ENCODE measurements at regions of chr1 and their contacts with region 1.

Region 1: DNA sequence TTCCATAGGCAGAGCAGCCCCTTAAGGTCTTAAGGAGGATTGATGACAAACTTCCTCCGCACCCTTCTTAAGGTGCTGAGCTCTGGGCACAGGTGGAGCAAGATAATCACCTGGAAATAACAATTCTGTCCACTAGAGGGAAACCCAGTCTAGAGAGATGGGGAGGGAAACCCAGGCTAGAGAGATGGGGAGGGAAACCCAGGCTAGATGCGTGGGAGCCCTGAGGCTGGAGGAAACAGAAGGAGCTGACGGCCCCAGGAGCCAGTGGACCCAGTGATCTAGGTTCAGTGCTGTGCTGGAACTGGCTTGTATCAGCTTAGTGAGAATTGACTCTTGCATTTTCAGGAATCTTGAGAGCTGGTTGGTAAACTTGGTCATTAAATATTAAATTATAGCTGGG is 17.8 kb upstream of the MYCL start:
- DNase-seq: peak; percentile 68
- H3K4me3 Mint-ChIP-seq: no peak overlapping the region
- H3K27ac Mint-ChIP-seq: no peak overlapping the region
- H3K4me1 Mint-ChIP-seq: peaks cover 2% of the 10 kb centered on the region
- H3K27me3 Mint-ChIP-seq: peaks cover 4% of the 10 kb centered on the region

Region 2: DNA sequence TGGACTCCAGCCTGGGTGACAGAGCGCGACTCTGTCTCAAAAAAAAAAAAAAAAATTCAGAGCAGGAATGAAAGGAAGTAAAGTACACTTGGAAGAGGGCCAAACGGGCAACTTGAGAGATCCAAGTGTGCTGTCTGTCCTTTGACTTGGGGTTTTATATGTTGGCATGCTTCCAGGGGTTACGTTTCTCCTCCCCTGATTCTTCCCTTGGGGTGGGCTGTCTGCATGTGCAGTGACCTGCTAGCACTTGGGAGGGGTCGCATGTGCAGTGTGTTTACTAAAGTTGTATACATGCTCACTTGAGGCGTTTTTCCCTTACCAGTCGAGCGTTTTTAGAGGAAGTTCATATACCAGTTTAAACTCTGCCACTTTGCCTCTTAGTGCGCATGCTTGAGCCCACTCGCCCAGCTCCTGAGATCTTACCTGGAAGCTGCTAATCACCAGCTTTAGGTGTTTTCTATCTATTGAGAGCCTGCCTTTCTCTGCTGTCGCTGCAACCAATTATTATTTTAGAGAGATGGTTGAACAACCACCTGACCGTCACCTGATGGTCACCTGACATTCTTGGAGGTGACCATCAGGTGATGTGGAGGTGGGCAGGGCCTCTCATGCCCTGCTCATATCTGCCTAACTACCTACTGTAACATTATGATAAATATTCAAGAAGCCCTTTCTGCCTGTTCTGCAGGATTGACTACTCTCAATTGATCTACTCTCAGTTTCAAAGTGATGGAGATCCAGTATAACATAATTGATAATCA is 575.0 kb before region 1 on chr1:
- CTCF ChIA-PET with region 1: no interaction called
- POLR2A ChIA-PET with region 1: no interaction called
- intact Hi-C with region 1: no loop called
- DNase-seq: no peak
- H3K4me3 Mint-ChIP-seq: no peak overlapping the region
- H3K27ac Mint-ChIP-seq: peak overlapping the region; percentile 11
- H3K4me1 Mint-ChIP-seq: peaks cover 2% of the 10 kb centered on the region
- H3K27me3 Mint-ChIP-seq: no peaks in the 10 kb centered on the region

Region 3: GRCh38 chr1:39908534-39908933 is 11.0 kb before region 1 on chr1:
- CTCF ChIA-PET with region 1: interaction called, 15 read pairs
- POLR2A ChIA-PET with region 1: no interaction called
- intact Hi-C with region 1: no loop called
- DNase-seq: no peak
- H3K4me3 Mint-ChIP-seq: no peak overlapping the region
- H3K27ac Mint-ChIP-seq: no peak overlapping the region
- H3K4me1 Mint-ChIP-seq: no peaks in the 10 kb centered on the region
- H3K27me3 Mint-ChIP-seq: peaks cover 27% of the 10 kb centered on the region

Region 4: GRCh38 chr1:39954816-39955546 is 35.4 kb after region 1 on chr1 and contains the start of gene MFSD2A:
- CTCF ChIA-PET with region 1: interaction called, 15 read pairs
- POLR2A ChIA-PET with region 1: no interaction called
- intact Hi-C with region 1: no loop called
- DNase-seq: peak; percentile 94
- H3K4me3 Mint-ChIP-seq: peak within 1 kb of the TSS; percentile 84
- H3K27ac Mint-ChIP-seq: peak within 1 kb of the TSS; percentile 75
- H3K4me1 Mint-ChIP-seq: peaks cover 30% of the 10 kb centered on the region
- H3K27me3 Mint-ChIP-seq: no peaks in the 10 kb centered on the region
- total RNA-seq, gene MFSD2A: 6.0 to 7.5 TPM

Region 5: GRCh38 chr1:40032240-40032891 is 112.8 kb after region 1 on chr1:
- CTCF ChIA-PET with region 1: interaction called, 79 read pairs
- POLR2A ChIA-PET with region 1: no interaction called
- intact Hi-C with region 1: loop called (anchors 2 kb)
- DNase-seq: peak; percentile 61
- H3K4me3 Mint-ChIP-seq: no peak overlapping the region
- H3K27ac Mint-ChIP-seq: no peak overlapping the region
- H3K4me1 Mint-ChIP-seq: peaks cover 26% of the 10 kb centered on the region
- H3K27me3 Mint-ChIP-seq: no peaks in the 10 kb centered on the region

Region 6: DNA sequence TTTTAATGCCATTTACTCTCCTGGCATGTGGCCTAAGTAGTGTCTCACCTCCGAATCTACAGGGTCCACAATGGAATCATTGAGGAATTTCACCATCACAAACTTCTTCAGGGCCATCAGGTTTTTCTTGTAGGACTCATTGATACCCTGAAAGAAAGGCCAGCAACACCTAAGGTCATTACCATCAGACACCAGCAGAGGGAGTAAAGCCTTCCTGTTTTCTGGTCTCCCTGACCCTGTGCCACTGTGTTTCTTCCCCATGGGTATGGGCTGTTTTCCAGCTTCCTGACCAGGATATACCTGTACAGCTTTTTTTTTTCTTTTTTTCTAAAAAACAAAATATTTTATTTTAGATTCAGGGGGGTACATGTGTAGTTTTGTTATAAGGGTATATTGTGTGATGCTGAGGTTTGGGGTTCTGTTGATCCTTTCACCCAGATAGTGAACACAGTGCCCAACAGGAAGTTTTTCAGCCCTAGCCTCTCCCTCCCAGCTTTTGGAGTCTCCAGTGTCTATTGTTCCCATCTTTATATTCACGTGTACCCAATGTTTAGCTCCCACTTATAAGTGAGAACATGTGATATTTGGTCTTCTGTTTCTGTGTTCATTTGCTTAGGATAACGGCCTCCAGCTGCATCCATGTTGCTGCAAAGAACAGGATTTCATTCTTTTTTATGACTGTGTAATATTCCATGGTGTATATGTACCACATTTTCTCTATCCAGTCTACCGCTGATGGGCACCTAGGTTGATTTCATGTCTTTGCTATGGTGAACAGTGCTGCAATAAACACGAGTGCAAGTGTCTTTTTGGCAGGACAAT is 159.2 kb after region 1 on chr1:
- CTCF ChIA-PET with region 1: interaction called, 10 read pairs
- POLR2A ChIA-PET with region 1: no interaction called
- intact Hi-C with region 1: no loop called
- DNase-seq: peak; percentile 44
- H3K4me3 Mint-ChIP-seq: no peak overlapping the region
- H3K27ac Mint-ChIP-seq: no peak overlapping the region
- H3K4me1 Mint-ChIP-seq: peaks cover 10% of the 10 kb centered on the region
- H3K27me3 Mint-ChIP-seq: no peaks in the 10 kb centered on the region